Kidney (tissue), 22 donors: ENCODE measurements at regions of chr3 and their contacts with region 1.

Region 1: GRCh38 chr3:63349583-63350521 is 71.7 kb downstream of the SYNPR start:
- DNase-seq: peak in 3 of 5 donors; percentile 53 to 89 (median 81)
- H3K4me3 ChIP-seq: no peak overlapping the region
- H3K27ac ChIP-seq: no peak overlapping the region
- H3K4me1 ChIP-seq: no peaks in the 10 kb centered on the region
- H3K27me3 ChIP-seq: no peaks in the 10 kb centered on the region
- CTCF ChIP-seq: peak; percentile 76

Region 2: GRCh38 chr3:63470745-63471144 is 120.9 kb after region 1 on chr3:
- intact Hi-C with region 1: no loop called
- DNase-seq: no peak
- H3K4me3 ChIP-seq: no peak overlapping the region
- H3K27ac ChIP-seq: no peak overlapping the region
- H3K4me1 ChIP-seq: no peaks in the 10 kb centered on the region
- H3K27me3 ChIP-seq: no peaks in the 10 kb centered on the region
- CTCF ChIP-seq: no peak

Region 3: GRCh38 chr3:63576901-63577335 is 227.1 kb after region 1 on chr3:
- intact Hi-C with region 1: no loop called
- DNase-seq: peak in 2 of 5 donors; percentile 46 to 48
- H3K4me3 ChIP-seq: no peak overlapping the region
- H3K27ac ChIP-seq: no peak overlapping the region
- H3K4me1 ChIP-seq: no peaks in the 10 kb centered on the region
- H3K27me3 ChIP-seq: no peaks in the 10 kb centered on the region
- CTCF ChIP-seq: no peak

Region 4: DNA sequence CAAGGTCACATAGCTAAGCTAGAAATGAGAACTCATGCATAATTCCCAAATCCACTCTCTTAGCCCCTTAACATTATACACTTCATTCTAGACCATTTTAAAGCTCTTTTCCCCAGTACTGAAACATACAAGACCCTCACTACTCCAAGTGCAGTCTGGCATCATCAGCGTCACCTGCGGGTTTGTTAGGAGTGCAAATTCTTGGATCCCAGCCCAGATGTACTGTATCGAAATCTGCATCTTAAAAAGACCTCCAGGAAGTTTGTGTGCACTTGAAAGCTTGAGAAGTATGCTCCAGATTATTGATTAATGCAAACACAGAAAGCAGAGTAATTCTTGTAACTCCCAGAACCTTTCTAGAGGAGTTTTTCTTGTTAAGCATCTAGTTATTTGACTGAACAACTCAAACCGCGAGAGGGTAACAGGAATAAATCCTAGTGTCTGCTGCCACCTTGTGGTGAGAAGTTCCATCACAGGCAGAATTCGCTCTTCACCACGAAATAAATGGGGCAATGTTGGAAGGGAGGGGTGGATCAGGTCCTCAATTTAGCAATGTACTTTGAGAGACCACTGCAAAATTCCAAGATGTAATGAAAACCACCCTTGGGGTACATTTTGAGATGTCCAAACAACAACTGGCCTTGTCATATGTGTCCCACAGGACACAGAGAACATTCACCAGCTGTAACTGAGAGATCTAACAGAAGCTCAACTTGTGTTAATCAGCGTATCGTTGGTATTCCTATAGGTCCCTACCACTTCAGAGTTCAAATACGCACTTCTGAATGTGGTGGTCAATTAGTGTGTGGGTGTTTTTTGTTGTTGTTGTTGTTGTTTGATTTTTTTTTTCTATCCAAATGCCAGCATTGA is 468.7 kb after region 1 on chr3:
- intact Hi-C with region 1: loop called (anchors 5 kb)
- DNase-seq: peak in 4 of 5 donors; percentile 52 to 79 (median 65)
- H3K4me3 ChIP-seq: peak overlapping the region in 1 of 3 donors; percentile 13
- H3K27ac ChIP-seq: no peak overlapping the region
- H3K4me1 ChIP-seq: no peaks in the 10 kb centered on the region
- H3K27me3 ChIP-seq: no peaks in the 10 kb centered on the region
- CTCF ChIP-seq: peak; percentile 86